Ascending aorta (tissue), 2 donors: ENCODE measurements at regions of chr12 and their contacts with region 1.

Region 1: DNA sequence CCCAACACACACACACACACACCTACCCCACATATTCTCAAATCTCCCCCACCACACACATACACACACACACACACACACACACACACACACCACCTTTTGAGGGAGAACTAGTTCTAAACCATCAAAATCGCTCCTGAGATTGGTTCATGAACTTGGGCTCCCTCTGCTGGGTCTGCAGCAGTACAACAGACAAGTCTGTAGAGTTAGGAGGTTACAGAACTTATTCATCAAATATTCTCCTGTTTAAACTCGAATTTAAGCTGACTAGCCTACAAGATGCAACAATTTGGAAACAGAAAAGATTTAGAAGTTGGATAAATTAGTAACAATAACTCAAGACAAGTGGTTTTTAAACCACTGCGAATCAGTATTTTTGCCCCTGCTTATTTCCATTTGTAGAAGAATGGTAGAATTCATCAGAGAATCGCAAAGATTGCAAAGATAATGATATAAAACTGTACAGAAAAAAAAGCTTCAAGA is 136.4 kb upstream of the USP15 start:
- DNase-seq: peak in 1 of 2 donors; percentile 67
- H3K4me3 ChIP-seq: no peak overlapping the region
- H3K27ac ChIP-seq: no peak overlapping the region
- H3K4me1 ChIP-seq: peaks cover 0 to 4% of the 10 kb centered on the region in 2 donors
- H3K27me3 ChIP-seq: no peaks in the 10 kb centered on the region
- CTCF ChIP-seq: peak; percentile 45 to 76 (median 65)

Region 2: DNA sequence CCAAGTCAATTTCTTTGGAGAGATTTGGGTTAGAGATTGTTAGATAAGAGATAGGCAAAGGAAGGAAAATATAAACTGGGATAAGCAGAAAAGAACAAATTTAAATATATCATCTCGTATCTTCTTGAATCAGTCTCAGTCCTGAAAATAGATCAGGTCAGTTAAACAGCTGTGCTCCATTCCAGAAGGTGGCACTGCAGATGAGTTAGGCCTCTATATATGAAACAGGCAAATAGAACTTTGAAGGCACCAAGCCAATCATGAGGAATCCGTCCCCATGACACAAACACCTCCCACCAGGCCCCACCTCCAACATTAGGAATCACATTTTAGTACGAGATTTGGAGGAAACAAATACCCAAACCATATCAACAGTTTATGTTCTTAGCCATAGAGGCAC is 469.1 kb before region 1 on chr12:
- intact Hi-C with region 1: loop called (anchors 10 kb)
- DNase-seq: no peak
- H3K4me3 ChIP-seq: no peak overlapping the region
- H3K27ac ChIP-seq: no peak overlapping the region
- H3K4me1 ChIP-seq: no peaks in the 10 kb centered on the region
- H3K27me3 ChIP-seq: no peaks in the 10 kb centered on the region
- CTCF ChIP-seq: peak in 2 of 3 experiments; percentile 18 to 28

Region 3: GRCh38 chr12:61750604-61751003 is 373.2 kb before region 1 on chr12:
- intact Hi-C with region 1: loop called (anchors 10 kb)
- DNase-seq: no peak
- H3K4me3 ChIP-seq: no peak overlapping the region
- H3K27ac ChIP-seq: peak overlapping the region; percentile 32 to 48
- H3K4me1 ChIP-seq: peaks cover 0 to 6% of the 10 kb centered on the region in 2 donors
- H3K27me3 ChIP-seq: no peaks in the 10 kb centered on the region
- CTCF ChIP-seq: no peak

Region 4: DNA sequence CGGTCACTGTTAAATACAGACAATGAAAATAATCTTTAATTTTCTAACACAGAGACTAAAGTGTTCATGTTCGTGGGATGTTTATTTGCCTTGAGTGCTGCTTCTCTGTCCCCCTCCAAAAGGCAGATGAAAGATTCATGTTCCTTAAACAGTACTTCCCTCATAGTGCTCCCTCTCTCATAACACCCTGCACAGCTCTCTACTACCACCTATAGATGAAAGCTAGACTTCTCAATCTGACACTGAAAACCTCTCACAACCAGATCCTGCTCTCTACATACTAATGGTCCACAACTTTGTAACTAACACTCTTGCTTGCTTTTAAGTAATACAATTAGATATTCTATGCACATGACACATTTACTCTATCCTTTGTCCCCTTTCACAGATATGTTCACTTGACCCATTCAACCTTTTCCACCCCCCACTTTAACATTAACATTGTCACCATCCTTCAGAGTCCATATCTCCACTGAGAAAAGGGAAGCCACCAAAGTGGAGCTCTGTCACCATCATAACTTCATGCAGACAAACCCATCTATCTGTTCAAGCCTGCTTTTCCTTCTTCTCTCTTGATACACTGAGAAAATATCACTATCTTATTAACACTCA is 129.9 kb before region 1 on chr12:
- intact Hi-C with region 1: loop called (anchors 5 kb)
- DNase-seq: no peak
- H3K4me3 ChIP-seq: no peak overlapping the region
- H3K27ac ChIP-seq: no peak overlapping the region
- H3K4me1 ChIP-seq: peaks cover 0 to 2% of the 10 kb centered on the region in 2 donors
- H3K27me3 ChIP-seq: no peaks in the 10 kb centered on the region
- CTCF ChIP-seq: peak; percentile 20 to 70 (median 67)

Region 5: GRCh38 chr12:62181481-62181880 is 57.7 kb after region 1 on chr12:
- intact Hi-C with region 1: no loop called
- DNase-seq: no peak
- H3K4me3 ChIP-seq: no peak overlapping the region
- H3K27ac ChIP-seq: no peak overlapping the region
- H3K4me1 ChIP-seq: no peaks in the 10 kb centered on the region
- H3K27me3 ChIP-seq: no peaks in the 10 kb centered on the region
- CTCF ChIP-seq: no peak

Region 6: GRCh38 chr12:62192180-62192902 is 68.6 kb after region 1 on chr12:
- intact Hi-C with region 1: loop called (anchors 5 kb)
- DNase-seq: peak in 1 of 2 donors; percentile 79
- H3K4me3 ChIP-seq: peak overlapping the region; percentile 62 to 70
- H3K27ac ChIP-seq: peak overlapping the region in 1 of 2 donors; percentile 28
- H3K4me1 ChIP-seq: peaks cover 8 to 14% of the 10 kb centered on the region in 2 donors
- H3K27me3 ChIP-seq: no peaks in the 10 kb centered on the region
- CTCF ChIP-seq: peak; percentile 51 to 78 (median 68)